HEK293 (cell line): ENCODE measurements at regions of chr7 and their contacts with region 1.

Region 1: DNA sequence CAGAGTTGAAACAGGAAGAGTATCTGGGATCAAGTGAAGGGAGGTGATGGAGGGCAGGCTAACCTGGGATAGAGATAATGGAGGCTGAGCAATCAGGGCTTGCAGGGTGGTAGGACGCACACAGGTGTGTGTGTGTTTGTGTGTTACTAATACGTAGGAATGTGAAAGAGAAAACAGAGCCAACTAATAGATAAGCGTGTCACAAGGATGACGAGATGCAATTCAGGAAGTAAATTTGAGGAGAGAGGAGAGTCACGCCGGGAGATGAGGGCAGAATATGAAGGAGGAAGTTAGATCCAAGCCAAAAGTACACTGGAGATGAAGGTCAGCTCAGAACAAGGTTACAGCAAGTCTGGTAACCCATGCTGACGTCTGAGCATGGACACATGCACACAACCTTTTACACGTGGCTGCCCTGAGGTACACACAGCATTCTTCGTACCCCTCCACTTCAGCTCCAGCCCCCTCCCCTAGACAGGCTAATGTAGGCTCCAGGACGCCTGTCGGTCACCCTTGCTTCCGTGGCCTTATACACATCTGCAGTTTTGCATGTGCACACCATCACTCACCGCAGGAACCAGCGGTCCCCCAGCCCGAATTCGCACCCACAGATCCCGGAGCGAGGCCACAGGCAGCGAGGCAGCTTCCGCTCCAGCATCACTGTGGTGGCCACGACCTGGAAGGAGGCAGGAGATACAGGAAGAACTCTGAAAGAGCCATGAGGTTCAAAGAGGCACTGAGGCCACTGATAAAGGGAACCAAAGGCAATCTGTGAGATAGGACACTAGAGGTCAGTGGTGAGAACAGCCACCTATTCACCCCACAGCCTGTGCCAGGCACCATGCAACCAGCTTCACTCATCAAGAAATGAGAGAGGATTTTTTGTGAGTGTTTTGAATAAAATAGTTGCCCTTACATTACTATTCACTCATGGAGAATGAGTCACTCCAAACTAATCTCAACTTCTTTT is 23.7 kb upstream of the TRPV6 start:
- H3K4me3 ChIP-seq: no peak overlapping the region
- H3K27ac ChIP-seq: no peak overlapping the region
- H3K4me1 ChIP-seq: no peaks in the 10 kb centered on the region
- CTCF ChIP-seq: no peak

Region 2: GRCh38 chr7:142842251-142842766 is 66.9 kb before region 1 on chr7:
- CTCF ChIA-PET with region 1: no interaction called
- POLR2A ChIA-PET with region 1: no interaction called
- H3K4me3 ChIP-seq: no peak overlapping the region
- H3K27ac ChIP-seq: no peak overlapping the region
- H3K4me1 ChIP-seq: no peaks in the 10 kb centered on the region
- CTCF ChIP-seq: no peak

Region 3: DNA sequence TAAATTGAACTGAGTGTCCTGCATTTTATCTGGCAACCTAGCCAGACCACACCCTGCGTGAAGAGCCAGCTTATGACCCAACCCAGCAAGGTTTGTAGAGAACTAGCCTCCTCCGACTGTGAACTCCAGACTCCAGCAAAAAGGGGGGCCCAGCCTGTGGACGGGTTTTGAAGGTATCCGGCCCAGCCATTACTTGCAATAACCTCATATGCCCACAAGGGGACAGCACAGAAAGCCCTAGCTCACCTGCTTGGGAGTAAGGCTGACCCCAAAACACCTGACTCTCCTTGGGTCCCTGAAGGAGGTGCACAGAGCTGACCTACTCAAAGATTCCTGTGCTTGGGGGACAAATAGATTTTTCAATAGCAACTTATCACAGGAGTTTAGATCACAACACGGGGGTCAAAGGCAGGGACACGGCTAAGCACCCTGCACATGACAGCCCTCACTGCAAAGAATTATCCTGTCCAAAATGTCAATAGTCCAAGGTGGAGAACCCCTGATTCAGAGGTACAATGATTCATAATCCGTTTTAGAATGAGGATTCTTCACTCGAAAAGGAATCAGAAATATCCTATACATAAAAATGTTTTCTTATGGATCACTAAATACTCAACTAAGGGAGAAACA is 28.2 kb before region 1 on chr7:
- CTCF ChIA-PET with region 1: interaction called, 13 read pairs
- POLR2A ChIA-PET with region 1: no interaction called
- H3K4me3 ChIP-seq: no peak overlapping the region
- H3K27ac ChIP-seq: no peak overlapping the region
- H3K4me1 ChIP-seq: no peaks in the 10 kb centered on the region
- CTCF ChIP-seq: peak; percentile 10; the same call in 1 of the 2 replicates

Region 4: DNA sequence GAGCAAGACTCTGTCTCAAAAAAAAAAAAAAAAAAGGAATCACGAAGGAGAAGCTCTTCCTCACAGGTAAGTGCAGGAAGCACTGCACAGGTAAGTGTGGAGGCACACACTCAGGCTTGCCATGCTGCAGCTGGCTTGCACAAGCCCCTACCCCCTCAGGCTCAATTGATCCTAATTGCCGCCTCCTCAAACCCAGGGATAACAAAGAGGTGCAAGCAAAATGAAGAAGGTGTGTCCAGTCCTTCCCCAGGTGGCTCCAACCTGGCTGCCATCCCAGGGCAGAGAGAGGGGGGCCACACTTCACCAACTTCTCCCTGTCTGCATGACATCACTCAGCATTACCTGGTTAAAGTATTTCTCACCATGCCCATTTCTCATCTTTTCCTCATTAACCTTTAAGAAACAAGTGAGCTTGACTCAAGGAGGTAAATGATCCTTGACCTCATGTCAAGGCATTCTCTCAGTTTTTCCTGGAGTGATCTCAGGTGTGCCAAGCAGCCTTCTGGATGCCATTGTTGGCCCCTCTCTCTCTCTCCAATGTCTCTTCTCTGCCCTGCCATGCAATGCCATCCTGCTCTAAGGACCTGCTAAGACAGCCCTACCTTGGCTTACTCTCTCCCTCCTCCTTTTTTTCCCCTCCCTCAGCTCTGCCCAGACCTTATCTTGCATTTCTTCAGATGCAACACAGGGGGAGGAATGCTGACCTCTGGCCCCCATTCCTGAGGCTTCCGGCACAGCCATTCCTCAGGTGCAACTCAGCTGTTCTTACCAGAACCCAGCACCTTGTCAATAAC is 10.6 kb before region 1 on chr7:
- CTCF ChIA-PET with region 1: interaction called, 10 read pairs
- POLR2A ChIA-PET with region 1: interaction called, 3 read pairs
- H3K4me3 ChIP-seq: no peak overlapping the region
- H3K27ac ChIP-seq: no peak overlapping the region
- H3K4me1 ChIP-seq: no peaks in the 10 kb centered on the region
- CTCF ChIP-seq: no peak

Region 5: GRCh38 chr7:142999793-143000192 is 90.6 kb after region 1 on chr7:
- CTCF ChIA-PET with region 1: interaction called, 10 read pairs
- POLR2A ChIA-PET with region 1: no interaction called
- H3K4me3 ChIP-seq: no peak overlapping the region
- H3K27ac ChIP-seq: no peak overlapping the region
- H3K4me1 ChIP-seq: no peaks in the 10 kb centered on the region
- CTCF ChIP-seq: no peak